ENCODE measurements at regions of chr13 and their contacts with region 1.

Region 1: DNA sequence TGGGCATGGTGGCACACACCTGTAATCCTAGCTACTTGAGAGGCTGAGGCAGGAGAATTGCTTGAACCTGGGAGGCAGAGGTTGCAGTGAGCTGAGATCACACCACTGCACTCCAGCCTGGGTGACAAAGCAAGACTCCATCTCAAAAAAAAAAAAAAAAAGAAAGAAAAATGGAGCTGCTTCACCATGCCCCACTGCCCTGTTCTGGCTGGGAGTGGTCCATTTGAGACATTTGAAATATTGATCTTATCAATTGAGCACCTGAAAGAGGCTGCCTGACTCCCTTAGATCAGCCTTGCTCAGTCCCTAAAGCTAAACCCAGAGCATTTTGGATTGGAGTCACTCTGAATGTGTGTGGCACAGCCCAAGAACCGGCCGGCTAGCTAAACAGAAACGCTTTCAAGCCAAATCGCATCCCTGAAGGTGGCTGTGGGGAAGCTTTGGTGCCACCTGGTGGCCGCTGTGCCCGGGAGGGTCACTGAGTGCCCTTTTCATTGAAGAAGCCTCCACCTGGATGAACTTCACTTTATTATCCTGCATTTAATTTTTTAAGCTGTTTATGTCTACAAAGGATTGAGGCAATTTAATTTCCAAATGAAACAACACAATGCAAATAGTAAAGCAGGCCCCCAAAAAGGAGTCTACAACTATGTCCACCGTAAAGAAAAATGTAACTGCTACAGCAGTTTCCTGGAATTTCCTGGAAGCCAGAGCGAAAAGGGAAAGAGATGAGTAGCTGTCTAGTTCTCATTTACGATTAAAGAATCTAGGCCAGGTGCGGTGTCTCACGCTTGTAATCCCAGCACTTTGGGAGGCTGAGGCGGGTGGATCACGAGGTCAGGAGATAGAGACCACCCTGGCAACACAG is 53.1 kb upstream of the SERPINE3 start:
- DNase-seq: peak; percentile 36
- ATAC-seq: peak; percentile 95
- H3K4me3 ChIP-seq: no peak overlapping the region
- H3K27ac ChIP-seq: no peak overlapping the region
- H3K4me1 ChIP-seq: no peaks in the 10 kb centered on the region
- H3K27me3 ChIP-seq: no peaks in the 10 kb centered on the region
- CTCF ChIP-seq: peak; percentile 74 to 96 (median 96); a peak in 5 of 6 replicates
- POLR2A ChIP-seq: no peak
- RAD21 ChIP-seq: peak; percentile 84

Region 2: DNA sequence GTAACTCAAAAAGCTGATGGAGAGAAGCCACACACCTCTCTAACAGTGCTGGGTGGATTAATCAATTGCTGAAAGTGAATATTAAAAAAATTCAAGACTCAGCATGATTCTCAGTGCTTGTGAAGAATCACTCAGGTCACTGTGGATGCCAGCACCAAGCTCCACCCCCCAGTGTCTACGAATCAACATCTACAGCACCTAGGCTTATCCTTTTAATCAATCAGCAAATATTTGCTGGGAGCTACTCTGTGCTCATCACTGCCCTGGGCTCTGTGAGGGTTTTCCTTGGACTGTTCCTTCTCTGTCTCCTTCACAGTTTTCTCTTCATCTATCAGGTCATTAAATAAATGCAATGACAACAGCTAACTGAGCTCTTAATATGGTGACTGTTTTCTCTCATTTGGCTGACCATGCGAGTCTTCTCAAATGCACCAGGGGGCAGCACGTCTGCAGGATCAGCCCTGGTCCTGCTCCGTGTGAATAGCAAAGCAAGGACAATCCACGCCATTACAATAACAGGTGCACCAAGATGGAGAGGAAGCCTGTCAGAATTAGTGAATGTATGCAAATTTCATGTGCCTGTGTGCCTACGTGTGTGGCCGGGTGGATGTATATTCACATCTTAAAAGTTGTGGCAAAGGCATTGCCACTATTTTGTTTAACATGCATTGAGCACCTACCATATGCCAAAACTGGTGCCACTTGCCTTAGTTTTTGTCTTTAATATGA is 160.7 kb before region 1 on chr13:
- CTCF ChIA-PET with region 1: interaction called, 125 read pairs
- POLR2A ChIA-PET with region 1: interaction called, 8 read pairs
- RAD21 ChIA-PET with region 1: interaction called, 18 to 19 read pairs
- intact Hi-C with region 1: loop called (anchors 1 kb)
- DNase-seq: peak; percentile 60
- ATAC-seq: peak; percentile 96
- H3K4me3 ChIP-seq: no peak overlapping the region
- H3K27ac ChIP-seq: no peak overlapping the region
- H3K4me1 ChIP-seq: peaks cover 4 to 8% of the 10 kb centered on the region in 2 experiments; a peak in 2 of 4 replicates
- H3K27me3 ChIP-seq: no peaks in the 10 kb centered on the region
- CTCF ChIP-seq: peak; percentile 82 to 96 (median 87)
- POLR2A ChIP-seq: no peak
- RAD21 ChIP-seq: peak; percentile 86

Region 3: GRCh38 chr13:51148952-51149573 is 137.3 kb before region 1 on chr13:
- CTCF ChIA-PET with region 1: interaction called, 126 read pairs
- POLR2A ChIA-PET with region 1: interaction called, 6 read pairs
- RAD21 ChIA-PET with region 1: interaction called, 4 to 20 read pairs
- intact Hi-C with region 1: loop called (anchors 1 kb)
- DNase-seq: peak; percentile 34
- ATAC-seq: peak; percentile 83
- H3K4me3 ChIP-seq: no peak overlapping the region
- H3K27ac ChIP-seq: no peak overlapping the region
- H3K4me1 ChIP-seq: no peaks in the 10 kb centered on the region
- H3K27me3 ChIP-seq: peaks cover 24% of the 10 kb centered on the region; the same call in 1 of the 2 replicates
- CTCF ChIP-seq: peak; percentile 58 to 65 (median 60); a peak in 5 of 6 replicates
- POLR2A ChIP-seq: no peak
- RAD21 ChIP-seq: peak; percentile 82

Region 4: GRCh38 chr13:51156648-51157047 is 129.7 kb before region 1 on chr13:
- CTCF ChIA-PET with region 1: interaction called, 126 read pairs
- POLR2A ChIA-PET with region 1: no interaction called
- RAD21 ChIA-PET with region 1: no interaction called
- intact Hi-C with region 1: no loop called
- DNase-seq: no peak
- ATAC-seq: no peak
- H3K4me3 ChIP-seq: no peak overlapping the region
- H3K27ac ChIP-seq: no peak overlapping the region
- H3K4me1 ChIP-seq: no peaks in the 10 kb centered on the region
- H3K27me3 ChIP-seq: peaks cover 6% of the 10 kb centered on the region; the same call in 1 of the 2 replicates
- CTCF ChIP-seq: no peak
- POLR2A ChIP-seq: no peak
- RAD21 ChIP-seq: no peak

Region 5: GRCh38 chr13:51269039-51269438 is 17.3 kb before region 1 on chr13:
- CTCF ChIA-PET with region 1: interaction called, 27 read pairs
- POLR2A ChIA-PET with region 1: no interaction called
- RAD21 ChIA-PET with region 1: no interaction called
- intact Hi-C with region 1: no loop called
- DNase-seq: no peak
- ATAC-seq: no peak
- H3K4me3 ChIP-seq: no peak overlapping the region
- H3K27ac ChIP-seq: no peak overlapping the region
- H3K4me1 ChIP-seq: no peaks in the 10 kb centered on the region
- H3K27me3 ChIP-seq: no peaks in the 10 kb centered on the region
- CTCF ChIP-seq: no peak
- POLR2A ChIP-seq: no peak
- RAD21 ChIP-seq: no peak

Region 6: DNA sequence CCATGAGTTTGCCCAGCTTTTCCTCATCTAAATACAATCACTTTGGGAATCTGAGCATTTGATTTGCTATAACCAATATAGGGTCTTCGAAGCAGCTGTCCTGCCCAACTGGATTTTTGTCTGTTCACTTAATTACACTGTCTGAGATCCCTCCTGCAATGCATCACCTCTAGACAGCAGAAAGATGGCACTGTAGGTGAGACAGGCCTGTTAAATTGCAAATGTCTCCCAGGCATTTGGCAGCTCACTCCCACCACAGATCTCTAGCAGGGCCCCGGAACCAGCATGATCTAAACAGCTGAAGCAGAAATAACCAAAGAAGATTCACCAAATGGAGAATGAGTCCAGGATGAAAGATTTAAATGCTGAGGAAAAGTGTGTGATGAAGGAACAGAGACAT is 11.2 kb after region 1 on chr13:
- CTCF ChIA-PET with region 1: interaction called, 19 read pairs
- POLR2A ChIA-PET with region 1: no interaction called
- RAD21 ChIA-PET with region 1: no interaction called
- intact Hi-C with region 1: no loop called
- DNase-seq: no peak
- ATAC-seq: peak; percentile 63
- H3K4me3 ChIP-seq: no peak overlapping the region
- H3K27ac ChIP-seq: no peak overlapping the region
- H3K4me1 ChIP-seq: no peaks in the 10 kb centered on the region
- H3K27me3 ChIP-seq: no peaks in the 10 kb centered on the region
- CTCF ChIP-seq: peak in 2 of 3 experiments; percentile 7 to 25; a peak in 1 of 6 replicates
- POLR2A ChIP-seq: no peak
- RAD21 ChIP-seq: peak; percentile 26; the same call in 1 of the 2 replicates

Region 7: DNA sequence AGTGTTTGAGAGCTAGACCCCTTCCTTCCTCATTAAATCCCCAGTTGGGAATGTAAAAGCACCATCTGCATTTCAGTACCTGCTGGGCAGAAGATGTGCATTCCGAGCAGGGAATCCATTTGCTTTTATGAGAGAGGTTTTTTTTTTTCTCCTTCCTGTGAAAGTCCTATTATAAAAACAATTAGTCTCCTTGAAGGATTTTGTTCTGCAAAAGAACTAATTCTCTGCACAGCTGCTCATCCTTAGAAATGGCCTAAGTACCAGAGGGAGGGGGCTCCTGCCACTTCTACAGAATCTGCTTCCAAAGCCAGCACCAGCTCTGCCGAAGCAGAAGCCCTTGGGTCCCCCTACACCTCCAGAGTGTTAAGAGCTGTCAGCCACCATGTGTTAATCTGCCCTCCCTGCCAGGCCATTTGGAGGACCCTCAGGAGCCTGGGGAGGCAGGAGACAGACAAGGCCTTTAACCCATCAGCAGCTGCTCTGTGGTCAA is 16.7 kb after region 1 on chr13:
- CTCF ChIA-PET with region 1: interaction called, 19 read pairs
- POLR2A ChIA-PET with region 1: no interaction called
- RAD21 ChIA-PET with region 1: no interaction called
- intact Hi-C with region 1: no loop called
- DNase-seq: no peak
- ATAC-seq: no peak
- H3K4me3 ChIP-seq: no peak overlapping the region
- H3K27ac ChIP-seq: no peak overlapping the region
- H3K4me1 ChIP-seq: no peaks in the 10 kb centered on the region
- H3K27me3 ChIP-seq: no peaks in the 10 kb centered on the region
- CTCF ChIP-seq: no peak
- POLR2A ChIP-seq: no peak
- RAD21 ChIP-seq: no peak

Region 8: DNA sequence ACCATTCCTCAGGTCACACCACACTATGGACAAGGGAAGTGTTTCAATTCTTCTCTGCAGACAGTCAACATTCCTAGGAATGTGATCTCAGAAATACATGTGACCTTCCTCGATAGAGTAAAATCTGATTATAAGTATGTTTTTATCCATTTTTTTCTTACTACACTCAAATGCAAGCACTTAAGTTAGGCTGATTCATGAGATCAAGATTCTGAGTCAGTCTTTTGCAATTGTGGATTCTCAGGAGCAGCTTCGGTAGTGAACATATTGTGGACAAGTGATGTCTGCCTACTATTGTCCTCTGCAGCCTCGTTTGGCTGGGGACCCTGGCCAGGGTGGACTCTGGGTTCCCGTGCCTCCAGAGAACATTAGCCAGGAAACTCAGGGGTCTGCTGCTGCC is 56.3 kb after region 1 on chr13:
- CTCF ChIA-PET with region 1: no interaction called
- POLR2A ChIA-PET with region 1: no interaction called
- RAD21 ChIA-PET with region 1: no interaction called
- intact Hi-C with region 1: no loop called
- DNase-seq: no peak
- ATAC-seq: no peak
- H3K4me3 ChIP-seq: no peak overlapping the region
- H3K27ac ChIP-seq: no peak overlapping the region
- H3K4me1 ChIP-seq: no peaks in the 10 kb centered on the region
- H3K27me3 ChIP-seq: no peaks in the 10 kb centered on the region
- CTCF ChIP-seq: no peak
- POLR2A ChIP-seq: no peak
- RAD21 ChIP-seq: no peak

Region 9: GRCh38 chr13:51465124-51465523 is 178.8 kb after region 1 on chr13:
- CTCF ChIA-PET with region 1: no interaction called
- POLR2A ChIA-PET with region 1: no interaction called
- RAD21 ChIA-PET with region 1: no interaction called
- intact Hi-C with region 1: no loop called
- DNase-seq: no peak
- ATAC-seq: no peak
- H3K4me3 ChIP-seq: no peak overlapping the region
- H3K27ac ChIP-seq: no peak overlapping the region
- H3K4me1 ChIP-seq: no peaks in the 10 kb centered on the region
- H3K27me3 ChIP-seq: no peaks in the 10 kb centered on the region
- CTCF ChIP-seq: no peak
- POLR2A ChIP-seq: no peak
- RAD21 ChIP-seq: no peak

Region 10: DNA sequence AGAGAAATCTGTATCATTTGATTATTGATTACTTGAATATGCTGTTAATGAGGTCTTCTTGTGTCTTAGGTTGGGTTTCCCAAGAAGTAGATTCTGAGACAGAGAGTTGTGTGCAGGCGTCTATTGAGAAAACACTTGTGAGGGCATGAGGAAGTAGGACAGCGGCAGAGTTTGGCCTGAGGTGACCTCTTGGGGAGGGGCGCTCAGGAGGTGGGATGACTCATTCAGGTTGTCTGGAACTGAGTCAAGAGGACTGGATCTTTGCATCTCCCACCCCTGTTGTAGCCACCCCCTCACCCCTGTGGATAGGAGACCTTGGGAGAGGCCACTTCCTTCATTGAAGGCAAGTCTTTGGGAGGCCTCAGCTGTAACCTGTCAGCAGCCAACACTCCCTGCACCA is 262.7 kb after region 1 on chr13:
- CTCF ChIA-PET with region 1: no interaction called
- POLR2A ChIA-PET with region 1: no interaction called
- RAD21 ChIA-PET with region 1: no interaction called
- intact Hi-C with region 1: no loop called
- DNase-seq: no peak
- ATAC-seq: no peak
- H3K4me3 ChIP-seq: no peak overlapping the region
- H3K27ac ChIP-seq: no peak overlapping the region
- H3K4me1 ChIP-seq: peaks cover 2 to 8% of the 10 kb centered on the region in 2 experiments; a peak in 2 of 4 replicates
- H3K27me3 ChIP-seq: no peaks in the 10 kb centered on the region
- CTCF ChIP-seq: no peak
- POLR2A ChIP-seq: no peak
- RAD21 ChIP-seq: no peak

Measured in HCT116 (cell line).